Panc1 (cell line): ENCODE measurements at regions of chr9 and their contacts with region 1.

Region 1: DNA sequence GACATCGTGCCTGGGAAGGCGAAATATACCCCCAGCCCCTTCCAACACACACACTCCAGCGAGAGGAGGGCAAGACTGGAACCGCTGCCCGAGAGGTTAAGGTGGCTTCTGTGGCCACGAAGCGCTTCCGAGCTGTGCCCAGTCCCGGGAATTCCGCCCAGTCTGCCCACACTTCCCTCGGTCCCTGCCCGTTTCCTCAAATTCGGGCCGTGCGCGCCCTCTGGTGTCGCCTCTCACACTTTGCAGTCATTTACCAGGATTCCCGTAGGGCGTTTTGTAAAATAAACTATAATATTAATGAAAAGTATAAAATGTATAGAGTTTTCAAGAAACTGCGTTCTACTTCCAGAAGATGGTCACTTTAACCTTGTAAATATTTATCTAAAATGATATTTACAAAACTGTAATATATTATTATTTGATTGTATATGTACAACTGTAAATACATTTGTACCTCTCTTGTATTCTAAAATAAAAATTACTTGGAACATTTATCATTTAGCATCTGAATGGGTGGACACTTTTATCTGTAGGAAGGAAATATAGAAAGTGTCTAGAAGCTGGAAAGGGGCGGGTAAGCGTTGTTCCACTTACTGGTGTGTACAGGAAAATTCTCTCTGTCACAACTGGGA is 11.0 kb upstream of the EXOSC2 start:
- DNase-seq: no peak
- ATAC-seq: peak; percentile 83
- H3K4me3 ChIP-seq: peak overlapping the region; percentile 53 to 58
- H3K27ac ChIP-seq: no peak overlapping the region
- H3K4me1 ChIP-seq: no peaks in the 10 kb centered on the region
- H3K27me3 ChIP-seq: no peaks in the 10 kb centered on the region
- CTCF ChIP-seq: peak; percentile 83

Region 2: GRCh38 chr9:130451509-130452388 is 230.9 kb before region 1 on chr9:
- CTCF ChIA-PET with region 1: interaction called, 10 read pairs
- POLR2A ChIA-PET with region 1: no interaction called
- in situ Hi-C with region 1: no loop called
- intact Hi-C with region 1: no loop called
- DNase-seq: no peak
- ATAC-seq: peak; percentile 68
- H3K4me3 ChIP-seq: no peak overlapping the region
- H3K27ac ChIP-seq: no peak overlapping the region
- H3K4me1 ChIP-seq: peaks cover 12% of the 10 kb centered on the region
- H3K27me3 ChIP-seq: no peaks in the 10 kb centered on the region
- CTCF ChIP-seq: peak; percentile 62

Region 3: GRCh38 chr9:130480331-130481072 is 202.1 kb before region 1 on chr9:
- CTCF ChIA-PET with region 1: no interaction called
- POLR2A ChIA-PET with region 1: interaction called, 14 read pairs
- in situ Hi-C with region 1: no loop called
- intact Hi-C with region 1: no loop called
- DNase-seq: no peak
- ATAC-seq: peak; percentile 66; the same call in 1 of the 2 replicates
- H3K4me3 ChIP-seq: no peak overlapping the region
- H3K27ac ChIP-seq: no peak overlapping the region
- H3K4me1 ChIP-seq: no peaks in the 10 kb centered on the region
- H3K27me3 ChIP-seq: no peaks in the 10 kb centered on the region
- CTCF ChIP-seq: no peak

Region 4: GRCh38 chr9:130780865-130781504 is 98.4 kb after region 1 on chr9:
- CTCF ChIA-PET with region 1: no interaction called
- POLR2A ChIA-PET with region 1: no interaction called
- in situ Hi-C with region 1: no loop called
- intact Hi-C with region 1: no loop called
- DNase-seq: no peak
- ATAC-seq: no peak
- H3K4me3 ChIP-seq: no peak overlapping the region
- H3K27ac ChIP-seq: no peak overlapping the region
- H3K4me1 ChIP-seq: peaks cover 11% of the 10 kb centered on the region
- H3K27me3 ChIP-seq: no peaks in the 10 kb centered on the region
- CTCF ChIP-seq: no peak

Region 5: GRCh38 chr9:130805510-130806326 is 123.1 kb after region 1 on chr9:
- CTCF ChIA-PET with region 1: no interaction called
- POLR2A ChIA-PET with region 1: no interaction called
- in situ Hi-C with region 1: no loop called
- intact Hi-C with region 1: no loop called
- DNase-seq: no peak
- ATAC-seq: no peak
- H3K4me3 ChIP-seq: no peak overlapping the region
- H3K27ac ChIP-seq: no peak overlapping the region
- H3K4me1 ChIP-seq: no peaks in the 10 kb centered on the region
- H3K27me3 ChIP-seq: no peaks in the 10 kb centered on the region
- CTCF ChIP-seq: no peak

Region 6: DNA sequence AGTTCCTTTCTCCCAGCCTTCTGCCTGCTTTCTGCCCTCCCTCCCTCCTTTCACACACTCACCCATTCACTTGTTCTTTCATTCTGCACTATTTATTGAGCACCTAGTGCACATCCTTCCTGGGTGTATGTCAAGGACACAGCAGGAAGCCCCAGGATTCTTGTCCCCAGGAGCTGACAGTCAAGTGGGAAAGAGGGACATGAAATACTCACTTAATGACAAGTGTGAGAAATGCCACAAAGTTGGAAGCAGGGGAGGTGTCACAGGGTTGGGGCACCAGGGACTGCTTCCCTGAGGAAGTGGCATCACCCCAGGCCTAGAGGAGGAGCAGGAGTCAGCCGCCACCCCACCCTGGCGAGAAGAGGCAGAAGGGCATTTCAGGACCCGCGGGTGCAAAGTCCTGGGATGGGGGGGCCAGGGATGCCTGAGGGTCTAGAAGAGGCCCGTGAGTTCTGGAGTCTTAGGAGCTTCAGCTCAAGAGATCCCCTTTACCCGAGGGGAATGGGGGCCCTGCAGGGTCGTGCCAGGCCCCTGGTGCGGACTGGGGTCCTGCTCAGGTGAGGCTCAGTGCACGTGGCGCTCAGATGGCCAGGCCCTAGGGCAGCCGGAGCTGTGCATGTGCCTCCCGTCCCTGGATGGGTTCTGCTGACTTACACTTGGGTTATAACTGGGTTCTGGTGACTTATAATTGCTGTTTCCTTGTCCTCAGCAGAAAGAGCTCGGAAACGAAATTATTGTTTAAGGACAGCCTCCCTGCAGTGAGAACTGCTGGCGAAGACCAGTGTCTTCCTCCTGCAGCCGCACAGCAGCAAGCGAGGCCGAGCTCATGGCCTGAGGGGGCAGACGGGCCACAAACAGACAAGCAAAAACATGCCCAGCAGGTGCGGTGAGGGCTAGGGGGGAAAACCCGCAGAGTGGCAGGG is 309.4 kb after region 1 on chr9:
- CTCF ChIA-PET with region 1: interaction called, 17 read pairs
- POLR2A ChIA-PET with region 1: no interaction called
- in situ Hi-C with region 1: no loop called
- intact Hi-C with region 1: no loop called
- DNase-seq: no peak
- ATAC-seq: no peak
- H3K4me3 ChIP-seq: no peak overlapping the region
- H3K27ac ChIP-seq: no peak overlapping the region
- H3K4me1 ChIP-seq: no peaks in the 10 kb centered on the region
- H3K27me3 ChIP-seq: no peaks in the 10 kb centered on the region
- CTCF ChIP-seq: no peak